Activated B cell treated with CpG ODN at 0.5 μM for 24 hours (primary cell): ENCODE measurements at regions of chr14 and their contacts with region 1.

Region 1: DNA sequence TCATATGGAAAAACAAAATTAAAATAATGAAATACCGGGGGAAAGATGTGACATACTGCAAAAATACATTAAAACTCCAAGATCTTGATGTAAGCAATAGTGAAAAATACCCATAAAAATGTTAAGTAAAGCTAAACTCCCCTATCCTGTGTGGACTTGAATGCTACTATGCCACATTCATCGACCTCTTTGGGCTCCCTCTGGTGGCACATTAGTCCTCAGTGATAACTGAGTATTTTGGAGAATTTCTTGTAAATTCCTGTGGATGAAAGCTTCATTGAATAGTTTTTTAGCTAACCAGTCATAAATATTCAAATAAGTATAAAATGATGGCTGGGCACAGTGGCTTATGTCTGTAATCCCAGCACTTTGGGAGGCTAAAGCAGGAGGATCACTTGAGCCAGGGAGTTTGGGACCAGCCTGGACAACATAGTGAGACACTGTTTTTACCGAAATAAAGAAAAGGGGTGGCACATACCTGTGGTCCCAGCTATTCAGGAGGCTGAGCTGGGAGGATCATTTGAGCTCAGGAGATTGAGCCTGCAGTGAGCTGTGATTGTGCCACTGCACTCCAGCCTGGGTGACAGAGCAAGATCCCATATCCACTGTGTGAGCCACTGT is 42.4 kb upstream of the SGPP1 start:
- DNase-seq: no peak
- ATAC-seq: peak; percentile 83
- H3K4me3 Mint-ChIP-seq: no peak overlapping the region
- H3K27ac Mint-ChIP-seq: no peak overlapping the region
- H3K4me1 Mint-ChIP-seq: peaks cover 13% of the 10 kb centered on the region
- H3K27me3 Mint-ChIP-seq: no peaks in the 10 kb centered on the region
- CTCF ChIP-seq: peak; percentile 42

Region 2: DNA sequence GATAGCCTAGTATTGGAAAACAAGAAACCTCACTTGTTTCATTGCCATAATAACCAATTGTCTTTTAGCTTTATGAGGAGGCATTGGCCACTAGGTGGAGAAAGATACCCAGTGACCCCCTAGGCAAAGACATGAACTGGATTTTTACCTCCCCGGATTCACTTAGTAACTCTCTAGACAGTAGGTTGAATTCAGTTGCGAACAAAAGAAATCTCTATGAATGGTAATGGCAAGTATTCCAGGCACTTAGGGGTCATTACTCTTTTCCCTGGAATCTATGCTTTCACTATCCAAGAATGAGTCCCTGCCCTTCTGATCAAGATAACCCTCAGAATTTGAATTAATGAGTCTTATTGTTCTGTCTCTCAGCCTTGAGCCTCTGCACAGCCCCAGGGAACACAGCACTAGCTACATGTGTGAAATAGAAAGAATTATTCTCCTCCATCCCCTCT is 595.5 kb before region 1 on chr14:
- CTCF ChIA-PET with region 1: no interaction called
- POLR2A ChIA-PET with region 1: no interaction called
- intact Hi-C with region 1: loop called (anchors 5 kb)
- DNase-seq: no peak
- ATAC-seq: no peak
- H3K4me3 Mint-ChIP-seq: no peak overlapping the region
- H3K27ac Mint-ChIP-seq: no peak overlapping the region
- H3K4me1 Mint-ChIP-seq: no peaks in the 10 kb centered on the region
- H3K27me3 Mint-ChIP-seq: peaks cover 6% of the 10 kb centered on the region
- CTCF ChIP-seq: no peak

Region 3: DNA sequence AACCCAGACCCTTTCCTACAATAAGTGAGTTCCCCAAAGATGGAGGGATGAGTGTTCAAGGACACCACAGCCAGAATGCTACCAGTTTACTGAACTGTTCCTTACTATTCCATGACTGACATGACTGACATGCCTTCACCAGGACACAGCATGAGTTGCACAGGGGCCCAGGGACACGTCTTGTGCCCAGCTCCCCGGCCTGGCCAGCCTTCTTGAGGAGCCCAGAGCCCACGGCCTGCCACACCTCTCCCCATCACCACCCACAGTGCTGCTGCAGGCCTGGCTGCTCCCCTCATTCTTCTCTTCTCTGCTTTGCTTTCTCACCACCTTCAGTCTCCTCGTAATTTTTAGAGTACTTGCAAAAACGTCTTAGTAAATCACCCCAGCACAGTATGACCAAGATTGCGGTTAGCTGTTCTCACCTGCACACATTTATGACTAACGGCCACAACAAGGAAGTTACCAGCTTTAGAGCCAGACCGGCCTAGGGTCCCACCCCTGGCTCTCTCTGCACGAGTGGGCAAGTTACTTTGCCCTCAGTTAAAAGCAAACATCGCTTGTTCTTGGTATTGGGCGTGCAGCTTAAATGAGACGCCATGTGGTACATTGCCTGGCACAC is 245.7 kb before region 1 on chr14:
- CTCF ChIA-PET with region 1: no interaction called
- POLR2A ChIA-PET with region 1: interaction called, 11 read pairs
- intact Hi-C with region 1: no loop called
- DNase-seq: no peak
- ATAC-seq: peak; percentile 94
- H3K4me3 Mint-ChIP-seq: peak overlapping the region; percentile 16
- H3K27ac Mint-ChIP-seq: peak overlapping the region; percentile 73
- H3K4me1 Mint-ChIP-seq: peaks cover 20% of the 10 kb centered on the region
- H3K27me3 Mint-ChIP-seq: no peaks in the 10 kb centered on the region
- CTCF ChIP-seq: no peak

Region 4: DNA sequence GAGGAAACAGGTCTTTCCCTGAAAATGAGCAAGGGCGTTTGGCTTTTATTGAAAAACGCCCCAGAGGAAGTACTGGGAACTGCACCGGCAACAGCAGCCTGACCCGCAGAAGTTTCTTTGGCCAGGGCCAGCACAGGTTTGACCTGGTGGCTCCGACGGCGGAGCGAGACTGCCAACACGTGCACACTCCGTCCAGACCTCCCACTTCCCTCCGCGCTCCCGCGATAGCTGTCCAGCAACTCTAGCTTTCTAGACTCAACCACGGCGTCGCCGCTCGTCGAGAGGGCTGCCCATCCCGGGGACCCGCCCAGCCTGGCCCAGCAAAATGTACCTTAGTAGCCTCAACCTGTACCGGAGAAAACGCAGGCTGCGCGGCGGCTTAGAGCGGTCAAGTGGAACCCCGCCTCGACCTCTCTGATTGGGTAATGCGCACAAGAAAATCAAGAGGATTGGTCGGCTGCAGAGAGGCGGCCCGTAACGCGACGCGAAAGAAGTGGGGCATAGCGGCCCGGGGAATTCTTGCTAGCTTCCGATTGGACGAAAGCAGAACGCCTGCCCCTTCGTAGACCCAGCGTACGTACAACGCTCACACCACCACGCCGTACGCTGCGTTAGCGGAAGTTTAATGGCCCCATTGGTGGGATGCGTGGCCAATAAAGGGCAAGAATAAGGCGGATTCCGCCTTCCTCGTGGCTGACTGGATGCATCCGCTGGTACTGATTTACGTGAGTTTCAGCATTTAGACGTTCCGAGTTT is 128.6 kb before region 1 on chr14 and contains the start of gene WDR89:
- CTCF ChIA-PET with region 1: interaction called, 26 read pairs
- POLR2A ChIA-PET with region 1: interaction called, 11 read pairs
- intact Hi-C with region 1: loop called (anchors 2 kb)
- DNase-seq: peak; percentile 84
- ATAC-seq: peak; percentile 83
- H3K4me3 Mint-ChIP-seq: peak within 1 kb of the TSS; percentile 92
- H3K27ac Mint-ChIP-seq: peak within 1 kb of the TSS; percentile 98
- H3K4me1 Mint-ChIP-seq: peaks cover 34% of the 10 kb centered on the region
- H3K27me3 Mint-ChIP-seq: no peaks in the 10 kb centered on the region
- CTCF ChIP-seq: no peak
- total RNA-seq, gene WDR89: 21.9 and 24.4 TPM in 2 replicates

Region 5: DNA sequence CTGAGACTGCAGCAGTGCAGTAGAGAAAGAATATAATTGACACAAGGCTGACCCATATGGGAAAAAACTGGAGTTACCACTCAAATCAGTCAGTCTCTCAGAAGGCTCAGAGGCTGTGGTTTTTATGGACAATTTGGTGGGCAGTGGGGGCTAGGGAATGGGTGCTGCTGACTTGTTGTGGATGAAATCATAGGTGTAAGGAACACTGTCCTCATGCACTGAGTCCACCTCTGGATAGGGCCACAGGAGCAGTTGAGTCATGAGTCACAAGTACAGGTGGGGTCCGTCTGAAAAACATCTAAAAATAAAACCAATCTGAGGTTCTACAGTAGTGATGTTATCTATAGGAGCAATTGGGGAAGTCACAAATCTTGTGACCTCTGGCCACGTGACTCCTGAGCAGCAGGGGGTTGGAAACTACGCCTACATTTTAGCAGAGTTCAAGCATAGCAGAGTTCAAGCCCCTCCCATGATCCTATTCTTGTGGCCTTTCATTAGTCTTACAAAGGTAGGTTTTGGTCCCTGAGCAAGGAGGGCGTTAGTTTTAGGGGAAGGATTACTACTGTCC is 24.4 kb before region 1 on chr14:
- CTCF ChIA-PET with region 1: interaction called, 9 read pairs
- POLR2A ChIA-PET with region 1: interaction called, 3 read pairs
- intact Hi-C with region 1: loop called (anchors 1 kb)
- DNase-seq: peak; percentile 36
- ATAC-seq: peak; percentile 75
- H3K4me3 Mint-ChIP-seq: peak overlapping the region; percentile 63
- H3K27ac Mint-ChIP-seq: peak overlapping the region; percentile 96
- H3K4me1 Mint-ChIP-seq: peaks cover 47% of the 10 kb centered on the region
- H3K27me3 Mint-ChIP-seq: no peaks in the 10 kb centered on the region
- CTCF ChIP-seq: no peak

Region 6: DNA sequence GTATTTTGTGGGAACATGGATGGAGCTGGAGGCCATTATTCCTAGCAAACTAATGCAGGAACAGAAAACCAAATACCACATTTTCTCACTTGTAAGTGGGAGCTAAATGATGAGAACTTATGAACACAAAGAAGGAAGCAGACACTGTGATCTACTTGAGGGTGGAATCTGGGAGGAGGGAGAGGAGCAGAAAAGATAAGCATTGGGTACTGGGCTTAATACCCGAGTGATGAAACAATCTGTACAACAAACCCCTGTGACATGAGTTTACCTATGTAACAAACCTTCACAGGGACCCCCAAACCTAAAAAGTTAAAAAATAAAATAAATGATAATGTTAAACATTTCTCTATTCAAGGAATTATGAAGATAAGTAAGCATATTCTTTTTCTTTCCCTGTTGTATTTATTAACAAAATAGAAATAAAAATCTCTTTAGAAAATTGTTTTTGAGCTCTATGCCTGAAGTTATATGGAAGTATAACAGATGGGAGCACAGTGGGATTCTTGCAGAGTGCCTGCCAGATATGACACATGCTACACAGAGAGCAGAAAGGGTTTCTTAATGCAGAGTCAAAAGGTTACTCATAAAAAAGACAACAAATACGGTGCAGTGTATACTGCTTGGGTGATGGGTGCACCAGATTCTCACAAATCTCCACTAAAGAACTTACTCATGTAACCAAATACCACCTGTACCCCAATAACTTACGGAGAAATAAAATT is 30.5 kb after region 1 on chr14:
- CTCF ChIA-PET with region 1: no interaction called
- POLR2A ChIA-PET with region 1: no interaction called
- intact Hi-C with region 1: no loop called
- DNase-seq: no peak
- ATAC-seq: no peak
- H3K4me3 Mint-ChIP-seq: no peak overlapping the region
- H3K27ac Mint-ChIP-seq: no peak overlapping the region
- H3K4me1 Mint-ChIP-seq: peaks cover 3% of the 10 kb centered on the region
- H3K27me3 Mint-ChIP-seq: no peaks in the 10 kb centered on the region
- CTCF ChIP-seq: no peak

Region 7: GRCh38 chr14:63960926-63961567 is 190.8 kb after region 1 on chr14:
- CTCF ChIA-PET with region 1: no interaction called
- POLR2A ChIA-PET with region 1: no interaction called
- intact Hi-C with region 1: no loop called
- DNase-seq: no peak
- ATAC-seq: no peak
- H3K4me3 Mint-ChIP-seq: no peak overlapping the region
- H3K27ac Mint-ChIP-seq: no peak overlapping the region
- H3K4me1 Mint-ChIP-seq: no peaks in the 10 kb centered on the region
- H3K27me3 Mint-ChIP-seq: no peaks in the 10 kb centered on the region
- CTCF ChIP-seq: no peak